ENCODE measurements at regions of chr10 and their contacts with region 1.

Region 1: GRCh38 chr10:47311932-47312662 is 10.2 kb upstream of the GDF2 start:
- DNase-seq: peak; percentile 57 to 74
- ATAC-seq: peak; percentile 81 to 90
- H3K4me3 ChIP-seq: no peak overlapping the region
- H3K27ac ChIP-seq: no peak overlapping the region
- H3K4me1 ChIP-seq: no peaks in the 10 kb centered on the region
- H3K27me3 ChIP-seq: no peaks in the 10 kb centered on the region
- CTCF ChIP-seq: peak; percentile 75 to 82 (median 79)
- POLR2A ChIP-seq: no peak

Region 2: DNA sequence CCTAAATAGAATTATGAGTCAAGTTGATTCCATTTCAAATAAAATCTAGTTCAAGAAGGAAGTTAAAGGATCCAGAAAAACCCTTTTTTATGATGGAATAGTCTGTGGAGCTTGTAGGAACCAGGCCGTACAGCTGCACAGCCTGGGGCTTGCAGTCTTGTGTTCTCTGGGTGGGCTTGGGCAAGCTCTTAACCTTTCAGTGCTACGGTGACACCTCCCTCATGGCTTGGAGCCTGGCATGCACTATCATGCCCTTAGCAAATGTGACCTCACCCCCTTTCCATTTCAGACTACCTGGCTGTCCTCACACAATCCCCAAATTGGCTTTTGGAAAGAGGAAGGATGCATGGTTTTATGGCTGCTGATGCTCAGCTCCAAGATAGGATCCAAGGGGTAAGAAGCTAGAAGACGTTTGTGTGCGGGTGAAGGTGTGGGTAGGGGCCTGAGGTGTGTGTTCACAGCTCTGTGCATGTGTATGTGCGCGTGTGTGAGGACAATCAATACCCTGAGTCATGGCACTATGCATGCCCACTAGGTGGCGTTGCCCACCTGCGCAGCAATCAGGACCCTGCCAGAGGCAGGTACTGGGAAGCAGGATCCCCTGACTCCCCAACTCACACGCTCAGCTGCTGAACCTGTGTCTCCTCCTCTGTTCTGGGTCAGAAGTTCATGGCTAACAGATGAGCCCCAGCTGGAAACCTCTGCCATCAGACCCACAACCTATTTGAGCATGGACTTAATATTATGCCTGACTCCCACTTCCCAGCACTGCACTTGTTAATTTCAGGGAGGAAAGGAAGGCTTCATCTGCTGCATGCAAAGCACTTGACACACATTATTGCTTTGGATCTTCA is 287.5 kb before region 1 on chr10:
- in situ Hi-C with region 1: loop called in 2 of 4 experiments (anchors 10 kb)
- intact Hi-C with region 1: loop called (anchors 1 kb)
- DNase-seq: peak in 1 of 2 donors; percentile 60
- ATAC-seq: peak; percentile 38 to 76
- H3K4me3 ChIP-seq: no peak overlapping the region
- H3K27ac ChIP-seq: no peak overlapping the region
- H3K4me1 ChIP-seq: no peaks in the 10 kb centered on the region
- H3K27me3 ChIP-seq: no peaks in the 10 kb centered on the region
- CTCF ChIP-seq: peak; percentile 68 to 79 (median 77)
- POLR2A ChIP-seq: no peak

Region 3: DNA sequence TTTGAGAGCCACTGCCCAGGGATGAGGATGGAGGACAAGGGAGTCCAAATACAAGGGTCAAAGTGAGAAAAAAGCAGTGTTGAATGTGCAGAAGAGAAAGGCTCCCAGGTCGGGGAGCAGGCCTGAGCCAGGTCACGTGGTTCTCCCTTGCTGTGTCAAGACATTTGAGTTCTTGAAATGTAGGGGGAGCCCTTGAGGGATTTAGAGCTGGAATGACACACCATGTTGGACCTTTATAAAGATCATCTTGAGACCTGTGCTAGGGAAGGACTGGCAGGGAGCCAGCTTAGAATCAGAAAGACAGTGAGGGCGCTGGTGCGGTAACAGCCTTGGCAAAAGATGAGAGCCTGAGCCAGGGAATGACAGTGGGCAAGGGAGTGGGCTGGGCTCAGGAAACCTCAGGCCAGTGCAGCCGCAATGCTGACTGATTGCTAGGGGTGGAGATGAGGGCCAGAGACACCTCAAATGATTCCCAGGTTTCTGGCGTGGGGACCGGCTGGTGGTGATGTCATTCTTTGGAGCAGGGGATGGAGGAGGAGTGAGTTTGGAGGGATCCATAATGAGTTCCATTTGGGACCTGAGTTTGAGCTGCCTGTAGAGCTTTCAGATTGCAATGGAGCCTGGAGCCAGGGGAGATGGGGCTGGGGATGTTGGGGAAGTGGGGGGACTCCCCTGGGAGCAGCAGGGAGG is 280.7 kb before region 1 on chr10:
- in situ Hi-C with region 1: loop called (anchors 10 kb)
- intact Hi-C with region 1: no loop called
- DNase-seq: peak; percentile 24 to 64
- ATAC-seq: peak; percentile 50 to 59
- H3K4me3 ChIP-seq: no peak overlapping the region
- H3K27ac ChIP-seq: peak overlapping the region; percentile 56 to 69 (median 64)
- H3K4me1 ChIP-seq: no peaks in the 10 kb centered on the region
- H3K27me3 ChIP-seq: no peaks in the 10 kb centered on the region
- CTCF ChIP-seq: no peak
- POLR2A ChIP-seq: no peak

Region 4: DNA sequence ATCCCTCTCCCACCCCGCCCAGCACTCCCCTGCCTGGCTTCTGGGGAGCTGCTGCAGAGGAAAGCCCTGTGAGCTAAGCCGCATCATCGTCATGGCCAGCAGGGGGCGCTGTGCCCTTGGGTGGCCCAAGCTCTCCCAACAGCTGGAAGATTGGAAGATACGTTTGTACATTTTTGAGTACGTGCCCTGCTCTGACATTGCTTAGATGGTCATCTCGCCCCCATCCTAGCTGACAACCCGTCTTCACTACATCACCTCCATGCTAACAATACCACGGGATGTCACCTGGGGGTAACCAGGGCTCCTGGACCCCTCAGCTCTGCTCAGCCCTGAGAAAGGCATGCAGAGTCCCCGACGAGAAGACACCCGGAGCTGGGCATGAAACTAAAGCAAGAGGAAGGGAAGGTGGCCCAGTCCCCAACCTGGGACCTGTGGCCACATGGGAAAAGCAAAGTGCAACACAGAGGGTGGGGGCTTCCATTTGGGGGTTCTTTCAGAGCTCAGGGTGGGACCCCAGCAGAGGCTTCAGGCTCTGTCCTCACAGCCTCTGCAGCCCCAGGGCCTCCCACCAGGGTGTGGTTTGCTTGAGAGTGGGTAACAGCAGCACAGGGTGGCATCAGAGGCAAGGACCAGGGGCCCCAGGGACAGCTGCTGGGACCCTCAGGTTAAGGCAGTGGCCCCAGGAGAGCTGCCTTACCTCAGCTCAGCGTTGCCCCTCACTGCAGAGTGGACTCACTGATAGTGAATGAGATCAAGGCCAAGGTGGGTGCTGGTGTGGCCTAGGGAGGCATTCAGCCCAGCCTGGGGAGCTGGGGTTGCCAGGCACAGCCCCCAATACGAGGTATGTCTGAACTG is 264.2 kb before region 1 on chr10:
- in situ Hi-C with region 1: loop called in 1 of 4 experiments (anchors 10 kb)
- intact Hi-C with region 1: loop called (anchors 1 kb)
- DNase-seq: peak; percentile 52 to 68
- ATAC-seq: peak; percentile 72 to 85
- H3K4me3 ChIP-seq: no peak overlapping the region
- H3K27ac ChIP-seq: no peak overlapping the region
- H3K4me1 ChIP-seq: peaks cover under 1 to 4% of the 10 kb centered on the region in 2 donors
- H3K27me3 ChIP-seq: no peaks in the 10 kb centered on the region
- CTCF ChIP-seq: peak; percentile 63 to 91 (median 88)
- POLR2A ChIP-seq: no peak

Region 5: DNA sequence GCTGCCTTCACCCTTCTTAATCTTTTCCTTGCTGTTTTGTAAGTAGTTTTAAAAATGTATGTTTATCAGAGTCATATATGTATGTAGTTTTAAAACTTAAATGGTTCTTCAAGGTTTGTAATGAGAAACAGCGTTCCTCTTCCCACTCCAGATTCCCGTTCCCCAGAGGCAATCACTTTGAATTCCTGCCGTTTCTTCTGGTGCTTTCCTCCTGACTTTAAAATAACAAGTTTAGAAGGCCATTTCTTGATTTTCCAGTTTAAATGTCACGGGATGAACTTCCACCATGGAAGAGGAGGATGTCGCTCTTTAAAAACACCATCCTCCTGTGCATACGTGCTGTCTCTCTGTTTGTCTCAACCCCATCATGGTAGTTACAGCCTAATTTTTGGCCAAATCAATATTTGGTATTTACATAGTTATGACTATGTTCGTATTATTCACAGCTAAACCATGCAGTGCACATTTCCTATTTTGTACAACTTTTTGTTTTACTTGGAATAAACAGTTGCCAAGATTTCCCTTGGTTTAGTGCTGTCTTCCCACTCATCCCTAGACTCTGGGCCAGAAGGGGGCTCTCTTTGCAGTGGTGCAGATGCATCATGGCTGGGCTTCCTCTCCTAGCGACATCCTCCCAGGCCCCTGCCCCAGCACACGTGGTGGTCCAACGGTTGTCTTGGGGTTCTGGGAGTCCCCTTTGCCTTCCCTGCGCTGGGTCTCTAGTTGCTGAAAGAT is 249.5 kb before region 1 on chr10:
- in situ Hi-C with region 1: loop called in 1 of 4 experiments (anchors 10 kb)
- intact Hi-C with region 1: no loop called
- DNase-seq: no peak
- ATAC-seq: no peak
- H3K4me3 ChIP-seq: no peak overlapping the region
- H3K27ac ChIP-seq: peak overlapping the region in 2 of 4 donors; percentile 53 to 58
- H3K4me1 ChIP-seq: peaks cover 26 to 37% of the 10 kb centered on the region in 2 donors
- H3K27me3 ChIP-seq: no peaks in the 10 kb centered on the region
- CTCF ChIP-seq: no peak
- POLR2A ChIP-seq: no peak

Region 6: GRCh38 chr10:47181052-47181849 is 130.8 kb before region 1 on chr10:
- in situ Hi-C with region 1: no loop called
- intact Hi-C with region 1: no loop called
- DNase-seq: no peak
- ATAC-seq: no peak
- H3K4me3 ChIP-seq: no peak overlapping the region
- H3K27ac ChIP-seq: no peak overlapping the region
- H3K4me1 ChIP-seq: peaks cover 0 to 22% of the 10 kb centered on the region in 2 donors
- H3K27me3 ChIP-seq: no peaks in the 10 kb centered on the region
- CTCF ChIP-seq: no peak
- POLR2A ChIP-seq: no peak

Region 7: DNA sequence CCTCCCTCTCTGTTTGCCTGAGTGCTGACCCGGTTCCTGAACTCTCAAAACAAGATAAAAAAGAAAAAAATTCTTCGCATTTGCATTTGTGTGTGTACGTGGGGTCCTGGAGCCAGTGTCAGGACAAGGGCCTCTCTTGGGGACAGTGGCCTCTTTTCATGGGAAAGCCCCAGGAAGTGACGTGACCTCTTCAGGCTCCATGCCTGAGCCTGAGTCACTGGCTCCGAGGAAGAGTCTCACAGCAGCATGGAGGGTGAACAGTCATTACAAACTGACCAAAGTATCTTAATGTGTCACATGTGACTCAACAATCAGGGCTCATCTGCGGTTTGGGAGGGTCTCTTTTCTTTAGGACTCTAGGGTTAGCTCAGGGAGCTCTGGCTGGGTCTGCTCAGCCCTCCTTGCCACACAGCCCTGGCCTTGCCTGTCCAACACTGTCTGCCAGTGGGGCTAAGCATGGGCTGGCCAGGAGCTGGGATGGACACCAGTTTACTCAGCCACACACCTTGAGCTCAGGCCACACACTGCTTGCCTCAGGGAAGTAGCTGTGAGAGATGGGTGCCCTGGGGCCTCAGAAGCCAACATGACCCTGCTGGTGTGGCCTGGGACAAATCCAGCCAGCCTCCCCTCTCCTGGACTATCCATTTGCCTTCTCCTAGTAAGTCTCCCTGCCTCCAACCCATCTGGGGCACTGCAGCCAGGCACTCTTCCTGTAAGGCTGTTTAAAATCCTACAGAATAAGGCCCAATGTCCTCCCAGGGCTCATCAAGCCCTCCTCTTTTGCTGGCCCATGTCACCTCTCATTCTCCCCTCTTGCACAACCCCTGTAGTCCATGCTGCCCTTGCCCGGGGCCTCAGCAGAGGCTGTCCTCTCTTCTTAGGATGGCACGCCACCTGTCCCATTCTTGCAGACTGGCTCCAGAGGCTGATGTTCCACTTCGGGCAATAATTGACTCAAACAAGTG is 1865.6 kb after region 1 on chr10:
- in situ Hi-C with region 1: no loop called
- intact Hi-C with region 1: no loop called
- DNase-seq: peak; percentile 26 to 34
- ATAC-seq: peak; percentile 82 to 86
- H3K4me3 ChIP-seq: no peak overlapping the region
- H3K27ac ChIP-seq: peak overlapping the region; percentile 65 to 72 (median 70)
- H3K4me1 ChIP-seq: peaks cover 4 to 7% of the 10 kb centered on the region in 2 donors
- H3K27me3 ChIP-seq: no peaks in the 10 kb centered on the region
- CTCF ChIP-seq: no peak
- POLR2A ChIP-seq: no peak

Measured in gastrocnemius medialis (tissue), 4 donors.